A549 (cell line): ENCODE measurements at regions of chr16 and their contacts with region 1.

Region 1: DNA sequence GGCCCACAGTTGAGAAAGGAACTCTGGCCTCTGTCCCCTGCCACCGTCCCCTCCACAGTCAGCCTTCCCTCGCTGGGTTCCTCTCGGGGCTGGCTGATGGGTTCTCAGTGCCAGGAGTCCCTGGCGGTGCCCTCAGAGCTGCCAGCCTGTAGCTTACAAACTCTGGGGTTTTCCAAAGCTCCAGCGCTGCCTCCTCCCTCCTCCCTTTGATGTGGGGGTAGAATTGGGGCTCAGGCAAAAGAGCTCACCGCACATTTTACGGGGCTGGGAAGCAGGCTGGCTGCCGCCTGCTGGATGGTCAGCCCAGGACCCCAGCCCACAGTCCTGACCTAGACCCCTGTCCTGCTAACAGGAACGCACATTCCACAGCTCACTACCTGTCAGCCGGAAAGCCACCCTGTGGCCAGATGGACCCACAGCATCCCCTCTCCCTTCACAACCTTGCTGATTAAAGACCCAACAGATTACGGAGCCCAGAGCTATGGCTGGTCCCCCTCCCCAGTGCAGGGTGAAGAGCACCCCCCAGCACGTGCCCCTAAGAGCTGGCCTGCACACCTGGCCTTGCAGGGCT is 6.0 kb downstream of the VASN start:
- DNase-seq: no peak
- ATAC-seq: 0 out of 6 replicates have a peak, but pooled peaks of 1 of the 2 experiments have one; percentile 5
- H3K4me3 ChIP-seq: no peak overlapping the region
- H3K27ac ChIP-seq: peak overlapping the region in 1 of 2 experiments; percentile 51; a peak in 2 of 6 replicates
- H3K4me1 ChIP-seq: peaks cover 65% of the 10 kb centered on the region
- CTCF ChIP-seq: no peak; the same call in 2 of the 3 replicates
- EP300 ChIP-seq: no peak
- POLR2A ChIP-seq: no peak
- RAD21 ChIP-seq: no peak

Region 2: DNA sequence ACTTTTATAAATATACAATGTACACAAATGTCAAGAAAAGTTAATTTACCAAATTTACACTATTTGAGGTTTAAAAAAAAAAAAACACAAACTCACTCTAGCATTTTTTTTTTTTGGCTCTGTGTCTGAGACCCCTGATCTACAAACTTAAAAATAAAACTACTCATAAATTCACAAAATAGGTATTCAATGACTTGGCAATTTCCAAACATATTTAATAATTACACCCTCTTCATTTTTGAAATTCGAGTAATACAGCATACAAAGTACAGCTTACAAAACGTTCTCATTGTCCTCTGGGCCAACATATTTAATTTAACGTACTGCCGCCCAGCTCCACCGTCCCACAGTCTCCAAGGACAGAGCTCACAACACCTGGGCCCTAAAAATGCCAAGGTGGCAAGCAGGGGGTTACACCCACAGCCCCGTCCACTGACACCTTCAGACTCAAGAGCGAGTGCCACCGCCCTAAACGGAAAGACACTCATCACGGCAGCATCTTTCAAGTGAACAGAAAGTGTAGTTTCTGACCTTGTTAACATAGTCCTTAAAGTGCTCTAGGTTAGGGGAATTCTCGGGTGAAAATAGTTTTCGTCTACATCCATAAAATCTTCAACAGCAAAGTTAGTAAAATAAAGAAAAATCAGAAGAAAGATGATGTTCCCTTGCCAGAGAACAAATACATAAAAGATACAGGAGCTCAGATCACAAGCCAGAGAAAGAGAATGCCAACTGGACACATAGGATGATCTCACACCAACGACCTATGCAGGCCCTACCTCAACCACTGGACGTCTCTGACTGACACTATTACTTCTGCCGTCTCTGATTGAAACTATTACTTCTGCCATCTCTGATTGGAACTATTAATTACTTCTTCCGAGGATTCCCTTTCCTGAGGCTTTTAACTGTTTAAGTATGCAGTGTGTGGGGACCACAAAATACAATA is 265.6 kb before region 1 on chr16:
- CTCF ChIA-PET with region 1: no interaction called
- POLR2A ChIA-PET with region 1: no interaction called
- DNase-seq: no peak
- ATAC-seq: no peak; a peak in 1 of 6 replicates
- H3K4me3 ChIP-seq: peak overlapping the region; percentile 11; the same call in 2 of the 3 replicates
- H3K27ac ChIP-seq: peak overlapping the region; percentile 37 to 68; a peak in 5 of 6 replicates
- H3K4me1 ChIP-seq: peaks cover 54% of the 10 kb centered on the region
- CTCF ChIP-seq: no peak
- EP300 ChIP-seq: no peak
- POLR2A ChIP-seq: no peak
- RAD21 ChIP-seq: no peak

Region 3: DNA sequence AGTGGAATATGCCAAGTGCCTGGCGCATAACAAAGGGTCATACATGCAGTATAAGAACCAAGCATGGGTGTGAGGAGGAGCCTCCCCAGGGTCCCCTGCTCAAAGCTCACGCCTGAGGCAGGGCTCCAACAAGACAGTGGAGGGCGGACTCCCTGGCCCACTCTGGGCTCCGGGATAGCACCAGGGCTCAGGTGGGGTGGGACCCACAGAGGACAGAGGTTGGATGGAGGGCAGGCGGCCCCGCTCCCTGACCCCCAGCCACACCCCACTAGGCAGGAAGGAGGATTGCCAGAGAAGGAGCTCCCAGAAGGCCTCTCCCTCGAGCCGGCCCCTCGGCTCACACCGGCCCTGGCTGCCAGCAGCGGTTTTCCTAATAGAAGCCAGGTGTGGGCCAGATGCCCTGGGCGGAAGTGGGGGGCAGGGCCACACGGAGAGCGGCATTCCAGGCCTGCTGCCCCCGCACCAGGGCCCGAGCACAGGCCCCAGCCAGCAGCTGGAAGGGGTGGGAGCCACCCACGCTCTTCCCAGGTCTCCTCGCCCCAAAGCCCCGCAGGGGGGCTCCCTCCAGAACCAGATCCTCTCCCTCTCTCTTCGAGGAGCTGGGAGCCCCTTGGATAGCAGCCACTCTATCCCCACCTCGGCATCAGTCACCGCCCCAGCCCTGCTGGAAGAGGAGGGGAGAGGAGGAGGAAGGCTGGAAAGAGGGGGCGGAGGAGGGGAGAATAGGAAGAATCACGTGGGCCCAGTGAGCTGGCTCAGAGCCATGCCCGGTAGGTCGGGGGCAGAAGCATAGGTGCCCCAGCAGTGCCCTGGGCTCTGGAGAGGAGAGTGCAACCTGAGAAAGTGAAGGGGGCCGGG is 15.0 kb after region 1 on chr16:
- CTCF ChIA-PET with region 1: interaction called, 12 read pairs
- POLR2A ChIA-PET with region 1: no interaction called
- DNase-seq: no peak
- ATAC-seq: no peak
- H3K4me3 ChIP-seq: no peak overlapping the region
- H3K27ac ChIP-seq: peak overlapping the region in 1 of 2 experiments; percentile 23; a peak in 1 of 6 replicates
- H3K4me1 ChIP-seq: peaks cover 16% of the 10 kb centered on the region; the same call in 2 of the 3 replicates
- CTCF ChIP-seq: no peak
- EP300 ChIP-seq: no peak
- POLR2A ChIP-seq: no peak
- RAD21 ChIP-seq: no peak